Left cardiac atrium (tissue), 4 donors: ENCODE measurements at regions of chr13 and their contacts with region 1.

Region 1: GRCh38 chr13:27379694-27380641 is 44.5 kb upstream of the GTF3A start:
- DNase-seq: peak; percentile 38
- ATAC-seq: no peak

Region 2: GRCh38 chr13:27728271-27728670 is 348.3 kb after region 1 on chr13:
- intact Hi-C with region 1: loop called in 1 of 2 experiments (anchors 10 kb)
- DNase-seq: no peak
- ATAC-seq: no peak